Natural killer cell (primary cell): ENCODE measurements at regions of chr17 and their contacts with region 1.

Region 1: GRCh38 chr17:80471922-80472321 is 4.5 kb downstream of the NPTX1 start:
- DNase-seq: peak; percentile 68 to 73
- ATAC-seq: peak; percentile 96
- H3K4me3 ChIP-seq: no peak overlapping the region
- H3K4me3 Mint-ChIP-seq: peak overlapping the region; percentile 81
- H3K27ac ChIP-seq: peak overlapping the region; percentile 8
- H3K27ac Mint-ChIP-seq: peak overlapping the region; percentile 81 to 91
- H3K4me1 ChIP-seq: peaks cover 49% of the 10 kb centered on the region
- H3K4me1 Mint-ChIP-seq: peaks cover 30 to 65% of the 10 kb centered on the region in 2 donors
- H3K27me3 ChIP-seq: peaks cover 34% of the 10 kb centered on the region
- H3K27me3 Mint-ChIP-seq: peaks cover 23 to 34% of the 10 kb centered on the region in 2 donors
- CTCF ChIP-seq: no peak

Region 2: GRCh38 chr17:80454557-80455335 is 17.2 kb before region 1 on chr17:
- intact Hi-C with region 1: loop called (anchors 2 kb)
- DNase-seq: peak; percentile 94 to 98
- ATAC-seq: peak; percentile 88 to 94 (median 89)
- H3K4me3 ChIP-seq: peak overlapping the region; percentile 88
- H3K4me3 Mint-ChIP-seq: peak overlapping the region; percentile 96
- H3K27ac ChIP-seq: peak overlapping the region; percentile 99
- H3K27ac Mint-ChIP-seq: peak overlapping the region; percentile 97 to 99
- H3K4me1 ChIP-seq: peaks cover 42% of the 10 kb centered on the region
- H3K4me1 Mint-ChIP-seq: peaks cover 26 to 29% of the 10 kb centered on the region in 2 donors
- H3K27me3 ChIP-seq: no peaks in the 10 kb centered on the region
- H3K27me3 Mint-ChIP-seq: peaks cover 8 to 10% of the 10 kb centered on the region in 2 donors
- CTCF ChIP-seq: no peak

Region 3: DNA sequence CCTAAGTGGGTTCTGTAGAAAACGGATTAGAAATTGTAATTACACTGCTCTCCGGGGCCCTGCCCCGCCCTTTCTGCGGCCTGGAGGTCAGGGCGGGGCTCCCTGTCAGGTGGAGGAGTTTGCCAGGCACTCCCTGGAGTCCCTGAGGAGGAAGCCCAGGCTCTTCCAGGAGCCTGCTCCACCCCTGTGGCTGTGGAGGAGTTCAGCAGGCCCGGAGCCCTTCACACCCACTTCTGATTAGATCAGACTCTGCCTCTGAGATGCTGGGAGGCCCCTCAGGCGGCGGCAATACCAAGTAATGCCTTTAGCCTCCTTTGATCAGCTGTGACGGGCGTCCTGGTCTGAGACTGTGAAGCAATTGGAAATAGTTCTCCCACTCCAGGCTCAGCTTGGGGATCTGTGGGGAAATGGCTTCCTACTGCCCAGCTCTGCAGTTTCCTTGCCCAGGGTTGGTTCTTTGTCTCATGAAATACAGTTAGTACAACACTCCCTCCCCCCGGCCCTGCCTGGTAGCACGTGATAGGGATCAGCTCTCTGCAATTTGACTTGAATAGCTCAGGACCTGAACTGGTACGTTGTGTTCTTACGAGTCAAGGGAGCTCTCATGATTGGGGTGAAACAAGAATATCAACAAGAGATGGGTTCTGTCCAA is 585.3 kb after region 1 on chr17:
- intact Hi-C with region 1: no loop called
- DNase-seq: no peak
- ATAC-seq: no peak
- H3K4me3 ChIP-seq: no peak overlapping the region
- H3K4me3 Mint-ChIP-seq: no peak overlapping the region
- H3K27ac ChIP-seq: no peak overlapping the region
- H3K27ac Mint-ChIP-seq: no peak overlapping the region
- H3K4me1 ChIP-seq: no peaks in the 10 kb centered on the region
- H3K4me1 Mint-ChIP-seq: no peaks in the 10 kb centered on the region
- H3K27me3 ChIP-seq: no peaks in the 10 kb centered on the region
- H3K27me3 Mint-ChIP-seq: no peaks in the 10 kb centered on the region
- CTCF ChIP-seq: no peak